Activated CD4-positive, alpha-beta T cell treated with anti-CD3 and anti-CD28 coated beads for 36 hours (primary cell): ENCODE measurements at regions of chr1 and their contacts with region 1.

Region 1: DNA sequence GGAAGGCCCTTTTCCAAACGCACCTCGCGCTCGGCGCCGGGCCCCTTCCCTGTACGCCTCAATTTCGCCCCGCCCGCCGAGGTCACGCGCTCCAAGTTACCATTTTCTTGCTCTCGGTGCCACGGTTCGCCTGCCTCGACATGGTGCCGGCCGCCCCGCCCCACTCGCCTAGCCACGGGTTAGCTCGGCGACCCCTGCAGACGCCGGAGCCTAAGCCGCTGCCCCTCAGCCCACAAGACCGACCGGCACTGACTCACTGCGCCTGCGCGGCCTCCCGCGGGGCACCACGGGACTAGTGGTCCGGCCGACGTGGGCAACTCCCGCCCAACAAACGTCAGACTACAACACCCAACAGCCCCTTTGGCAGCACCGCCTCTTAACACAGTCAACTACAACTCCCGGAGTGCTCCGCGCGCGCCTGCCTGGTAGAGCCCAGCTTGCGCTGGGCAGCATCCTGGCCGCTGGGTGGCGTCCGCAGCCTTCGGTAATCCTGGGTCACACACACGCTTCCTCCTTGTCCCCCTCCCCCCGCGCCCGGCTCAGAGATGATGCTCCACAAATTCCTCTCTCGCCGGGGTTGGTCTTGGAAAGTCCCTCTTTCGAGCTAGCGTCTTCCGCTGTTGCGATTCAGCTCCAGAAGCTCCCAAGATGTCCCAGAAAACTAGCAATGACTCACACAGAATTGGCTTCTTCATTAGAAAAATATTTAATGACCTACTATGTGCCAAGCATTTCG is at the start of gene TRAPPC3:
- DNase-seq: peak; percentile 100
- ATAC-seq: peak; percentile 93
- H3K4me3 Mint-ChIP-seq: peak within 1 kb of the TSS; percentile 95
- H3K27ac Mint-ChIP-seq: peak within 1 kb of the TSS; percentile 94
- H3K4me1 Mint-ChIP-seq: peaks cover 67% of the 10 kb centered on the region
- H3K27me3 Mint-ChIP-seq: no peaks in the 10 kb centered on the region
- total RNA-seq, gene TRAPPC3: 43.8 to 53.8 TPM

Region 2: GRCh38 chr1:35930593-35931445 is 218.6 kb before region 1 on chr1 and contains the start of gene AGO3:
- CTCF ChIA-PET with region 1: no interaction called
- POLR2A ChIA-PET with region 1: no interaction called
- intact Hi-C with region 1: loop called in 1 of 2 experiments (anchors 2 kb)
- DNase-seq: peak; percentile 95
- ATAC-seq: peak; percentile 95
- H3K4me3 Mint-ChIP-seq: peak within 1 kb of the TSS; percentile 92
- H3K27ac Mint-ChIP-seq: peak within 1 kb of the TSS; percentile 94
- H3K4me1 Mint-ChIP-seq: peaks cover 37% of the 10 kb centered on the region
- H3K27me3 Mint-ChIP-seq: no peaks in the 10 kb centered on the region
- total RNA-seq, gene AGO3: 23.3 to 33.8 TPM

Region 3: GRCh38 chr1:36160949-36161485 is 11.6 kb after region 1 on chr1:
- CTCF ChIA-PET with region 1: interaction called, 65 read pairs
- POLR2A ChIA-PET with region 1: interaction called, 34 read pairs
- intact Hi-C with region 1: loop called in 1 of 2 experiments (anchors 1 kb)
- DNase-seq: peak; percentile 86
- ATAC-seq: peak; percentile 59
- H3K4me3 Mint-ChIP-seq: peak overlapping the region; percentile 76
- H3K27ac Mint-ChIP-seq: peak overlapping the region; percentile 94
- H3K4me1 Mint-ChIP-seq: peaks cover 62% of the 10 kb centered on the region
- H3K27me3 Mint-ChIP-seq: no peaks in the 10 kb centered on the region

Region 4: GRCh38 chr1:36300526-36300925 is 151.1 kb after region 1 on chr1:
- CTCF ChIA-PET with region 1: interaction called, 22 read pairs
- POLR2A ChIA-PET with region 1: interaction called, 5 read pairs
- intact Hi-C with region 1: loop called in 1 of 2 experiments (anchors 1 kb)
- DNase-seq: peak; percentile 49
- ATAC-seq: peak; percentile 72
- H3K4me3 Mint-ChIP-seq: peak overlapping the region; percentile 3
- H3K27ac Mint-ChIP-seq: peak overlapping the region; percentile 87
- H3K4me1 Mint-ChIP-seq: peaks cover 64% of the 10 kb centered on the region
- H3K27me3 Mint-ChIP-seq: no peaks in the 10 kb centered on the region

Region 5: DNA sequence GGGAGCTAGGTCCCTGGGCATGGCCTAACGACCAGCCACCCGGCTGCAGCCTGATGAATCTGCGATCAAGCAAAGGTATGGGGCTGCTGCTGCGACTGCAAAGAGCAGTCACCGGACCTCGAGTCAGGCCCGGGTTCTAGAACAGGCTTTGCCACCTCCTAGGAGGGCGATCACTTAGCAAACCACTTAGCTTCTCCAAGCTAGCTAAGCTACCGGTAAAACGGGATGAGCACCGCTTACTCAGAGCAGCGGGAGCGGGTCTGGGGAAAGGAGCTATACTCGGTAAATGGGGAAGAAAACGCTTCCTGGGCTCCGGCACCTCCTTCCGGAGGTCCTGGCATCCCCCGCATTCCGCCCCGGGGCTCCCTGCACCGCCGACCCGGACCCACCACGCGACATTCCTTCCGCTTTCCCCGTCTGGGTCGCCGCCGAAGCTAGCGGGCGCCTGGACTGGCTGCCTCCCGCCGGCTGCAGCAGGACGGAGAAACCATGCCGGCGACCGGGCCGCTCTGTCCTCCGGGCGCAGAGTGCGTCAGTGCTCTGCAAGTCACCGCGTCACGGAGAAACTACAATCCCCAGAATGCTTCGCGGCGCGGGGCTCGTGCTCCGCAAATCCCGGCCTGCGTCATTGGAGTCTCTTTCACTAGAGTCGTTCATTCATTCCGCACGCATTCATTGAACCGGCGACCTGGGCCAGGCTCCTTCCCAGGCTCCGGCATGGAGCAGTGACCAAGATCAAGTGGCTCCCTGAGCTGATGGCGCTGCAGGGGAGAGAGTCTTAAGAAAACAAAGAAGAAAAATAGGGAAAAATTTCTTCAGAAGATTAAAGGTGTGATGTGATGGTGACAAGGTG is 248.2 kb after region 1 on chr1 and contains the start of gene LSM10:
- CTCF ChIA-PET with region 1: interaction called, 3 read pairs
- POLR2A ChIA-PET with region 1: interaction called, 4 read pairs
- intact Hi-C with region 1: loop called in 1 of 2 experiments (anchors 1 kb)
- DNase-seq: peak; percentile 96
- ATAC-seq: peak; percentile 89
- H3K4me3 Mint-ChIP-seq: peak within 1 kb of the TSS; percentile 90
- H3K27ac Mint-ChIP-seq: peak within 1 kb of the TSS; percentile 99
- H3K4me1 Mint-ChIP-seq: peaks cover 25% of the 10 kb centered on the region
- H3K27me3 Mint-ChIP-seq: no peaks in the 10 kb centered on the region
- total RNA-seq, gene LSM10: 40.6 to 44.0 TPM

Region 6: DNA sequence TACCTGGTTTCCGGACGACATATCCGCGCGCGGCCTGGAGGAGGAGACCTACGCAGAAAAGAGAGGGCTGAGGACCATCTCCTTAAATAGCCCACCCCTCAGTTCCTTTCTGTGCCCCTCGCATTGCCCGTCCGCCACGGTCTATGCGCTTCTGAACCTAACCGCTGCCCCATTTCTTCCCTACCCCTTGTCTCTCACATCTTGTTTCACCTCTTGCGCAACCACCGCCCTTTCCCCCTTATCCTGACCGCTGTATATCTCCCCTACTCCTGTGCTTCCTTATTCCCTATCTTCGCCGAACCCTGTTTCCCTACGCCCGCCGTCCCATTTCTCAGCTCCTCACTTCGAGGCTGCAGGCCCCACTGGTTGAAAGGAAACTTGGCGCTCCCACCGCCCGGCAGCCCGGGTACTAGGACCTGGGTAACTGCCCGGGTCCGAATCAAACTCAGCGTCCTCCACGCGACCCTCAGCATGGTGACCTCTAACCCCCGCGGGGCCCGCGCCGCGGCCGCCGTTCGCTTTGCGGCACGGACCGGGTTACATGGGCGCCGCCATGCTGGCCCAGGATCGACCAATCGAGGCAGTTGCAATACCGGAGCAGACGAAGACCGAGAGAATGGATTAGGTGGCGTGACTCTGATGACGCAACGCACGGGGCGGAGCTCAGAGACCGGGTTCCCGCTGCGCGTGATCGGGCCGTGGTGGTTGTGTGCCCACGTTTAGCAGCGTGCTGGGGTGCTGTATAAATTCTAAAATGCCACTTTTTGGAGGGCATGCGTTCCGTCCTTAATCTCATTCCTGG is 314.6 kb after region 1 on chr1 and contains the start of gene MRPS15:
- CTCF ChIA-PET with region 1: no interaction called
- POLR2A ChIA-PET with region 1: interaction called, 4 read pairs
- intact Hi-C with region 1: loop called (anchors 1 to 2 kb)
- DNase-seq: peak; percentile 98
- ATAC-seq: peak; percentile 94
- H3K4me3 Mint-ChIP-seq: peak within 1 kb of the TSS; percentile 97
- H3K27ac Mint-ChIP-seq: peak within 1 kb of the TSS; percentile 97
- H3K4me1 Mint-ChIP-seq: peaks cover 31% of the 10 kb centered on the region
- H3K27me3 Mint-ChIP-seq: no peaks in the 10 kb centered on the region
- total RNA-seq, gene MRPS15: 123 to 169 TPM